ENCODE measurements at regions of chr3 and their contacts with region 1.

Region 1: DNA sequence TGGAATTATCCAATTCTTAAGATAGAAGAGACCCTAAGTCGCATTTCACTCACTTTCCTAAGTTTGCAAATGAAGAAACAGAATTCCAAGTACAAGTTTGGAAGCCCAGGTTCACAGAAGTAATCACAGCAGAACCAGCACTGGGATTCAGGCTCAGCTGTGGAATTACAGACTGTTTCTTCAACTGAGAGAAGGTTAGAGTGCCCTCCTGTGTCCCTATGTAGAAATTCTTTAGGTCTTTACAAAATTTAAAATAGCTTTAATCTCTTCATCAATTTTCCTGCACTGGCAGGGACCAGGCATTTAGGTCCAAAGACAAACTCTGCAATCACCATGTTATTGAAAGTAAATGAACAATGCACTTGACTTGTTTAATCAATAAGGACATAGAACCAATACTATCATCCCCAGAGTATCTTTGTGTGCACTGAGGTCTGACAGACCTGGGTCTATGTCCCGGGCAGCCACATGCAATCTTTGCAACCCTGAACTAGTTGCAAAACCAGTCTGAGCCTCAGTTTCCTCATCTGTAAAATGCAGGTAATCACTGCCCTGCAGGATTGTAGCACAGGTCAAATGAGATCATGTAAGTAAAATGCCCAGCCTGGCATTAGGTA is 96.3 kb upstream of the ZBED2 start:
- DNase-seq: peak; percentile 45

Region 2: GRCh38 chr3:111668912-111669488 is 22.4 kb before region 1 on chr3:
- CTCF ChIA-PET with region 1: interaction called, 41 read pairs
- POLR2A ChIA-PET with region 1: interaction called, 6 read pairs
- DNase-seq: peak; percentile 51

Region 3: GRCh38 chr3:111739241-111739952 is 48.0 kb after region 1 on chr3:
- CTCF ChIA-PET with region 1: no interaction called
- POLR2A ChIA-PET with region 1: no interaction called
- DNase-seq: no peak

Region 4: GRCh38 chr3:111846717-111847116 is 155.3 kb after region 1 on chr3:
- CTCF ChIA-PET with region 1: no interaction called
- POLR2A ChIA-PET with region 1: no interaction called
- DNase-seq: no peak

Measured in HEK293T (cell line).